Activated naive CD4-positive, alpha-beta T cell treated with anti-CD3 and anti-CD28 coated beads for 36 hours (primary cell): ENCODE measurements at regions of chr12 and their contacts with region 1.

Region 1: DNA sequence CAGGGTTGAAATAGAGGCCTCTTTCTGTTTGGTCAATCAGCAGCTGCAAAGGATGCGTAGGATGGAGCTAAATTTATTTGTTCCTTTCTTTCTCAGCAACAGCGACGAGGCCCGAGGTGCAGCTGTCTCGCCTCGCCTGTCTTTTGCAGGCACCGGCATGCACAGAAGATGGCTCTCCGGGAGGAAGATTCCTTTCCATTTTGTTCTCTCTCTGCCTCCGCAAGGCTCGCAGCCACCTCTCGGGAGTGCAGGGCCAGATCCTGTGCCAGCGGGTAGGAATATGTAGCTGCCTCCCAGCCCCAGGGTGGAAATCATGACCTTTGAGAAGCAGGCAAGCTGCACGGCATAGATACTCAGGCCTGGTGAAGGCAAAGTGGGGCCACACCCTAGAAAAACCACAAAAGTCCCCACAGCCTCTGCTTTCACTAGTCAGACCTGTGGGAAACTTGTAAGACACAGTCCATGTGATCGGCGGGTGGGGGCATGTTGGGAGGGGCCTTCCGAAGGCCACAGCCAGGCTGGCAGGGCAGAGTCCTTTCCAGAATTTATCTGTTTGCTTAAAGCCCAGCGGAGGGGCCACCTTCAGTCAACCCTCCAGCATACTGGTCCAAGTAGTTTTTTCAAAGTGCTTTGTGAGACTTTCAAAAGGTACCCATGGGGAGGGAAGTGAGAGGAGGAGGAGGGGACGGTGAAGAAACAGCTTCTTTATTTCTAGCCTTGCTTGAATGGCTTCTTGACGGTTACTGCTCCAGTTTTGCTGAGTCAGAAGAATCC is at the start of gene MAP1LC3B2:
- DNase-seq: peak; percentile 92
- H3K4me3 Mint-ChIP-seq: peak within 1 kb of the TSS; percentile 73
- H3K27ac Mint-ChIP-seq: peak within 1 kb of the TSS; percentile 95
- H3K4me1 Mint-ChIP-seq: peaks cover 22% of the 10 kb centered on the region
- H3K27me3 Mint-ChIP-seq: no peaks in the 10 kb centered on the region
- total RNA-seq, gene MAP1LC3B2: 1.2 to 1.5 TPM

Region 2: DNA sequence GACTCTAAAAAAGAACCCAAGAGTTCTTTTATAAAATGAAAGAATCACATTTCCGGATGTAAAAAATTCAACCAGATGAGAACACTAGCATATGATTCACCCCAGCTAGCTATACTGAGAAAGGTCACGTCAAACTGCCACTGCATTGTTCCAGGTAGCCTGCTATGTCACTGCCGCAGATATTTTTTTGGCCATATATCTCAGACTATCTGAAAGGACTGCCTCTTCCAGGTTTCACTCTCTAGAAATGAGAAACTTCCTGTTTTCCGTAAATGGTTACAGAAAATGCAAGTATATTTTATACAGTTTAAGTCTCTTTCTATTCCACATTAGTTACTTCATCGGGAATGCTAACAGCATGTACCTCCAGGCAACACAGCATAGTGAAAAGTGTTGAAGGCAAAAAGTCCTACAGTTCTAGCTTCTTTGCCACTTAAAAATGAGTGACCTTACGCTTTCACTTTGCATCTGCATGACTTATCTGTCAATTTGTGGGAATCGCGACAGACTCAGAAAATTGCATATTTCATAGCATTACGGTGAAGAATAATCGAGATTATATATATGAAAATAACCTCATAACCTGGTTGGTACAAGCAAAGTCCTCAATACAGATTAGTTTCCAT is 387.0 kb before region 1 on chr12:
- CTCF ChIA-PET with region 1: no interaction called
- intact Hi-C with region 1: loop called (anchors 1 kb)
- DNase-seq: peak; percentile 78
- H3K4me3 Mint-ChIP-seq: peak overlapping the region; percentile 58
- H3K27ac Mint-ChIP-seq: peak overlapping the region; percentile 92
- H3K4me1 Mint-ChIP-seq: peaks cover 67% of the 10 kb centered on the region
- H3K27me3 Mint-ChIP-seq: no peaks in the 10 kb centered on the region

Region 3: GRCh38 chr12:116533343-116534251 is 25.8 kb before region 1 on chr12:
- CTCF ChIA-PET with region 1: no interaction called
- intact Hi-C with region 1: loop called (anchors 1 kb)
- DNase-seq: peak; percentile 82
- H3K4me3 Mint-ChIP-seq: peak overlapping the region; percentile 80
- H3K27ac Mint-ChIP-seq: no peak overlapping the region
- H3K4me1 Mint-ChIP-seq: peaks cover 22% of the 10 kb centered on the region
- H3K27me3 Mint-ChIP-seq: no peaks in the 10 kb centered on the region

Region 4: GRCh38 chr12:116573776-116574175 is 14.4 kb after region 1 on chr12:
- CTCF ChIA-PET with region 1: no interaction called
- intact Hi-C with region 1: no loop called
- DNase-seq: no peak
- H3K4me3 Mint-ChIP-seq: no peak overlapping the region
- H3K27ac Mint-ChIP-seq: no peak overlapping the region
- H3K4me1 Mint-ChIP-seq: no peaks in the 10 kb centered on the region
- H3K27me3 Mint-ChIP-seq: no peaks in the 10 kb centered on the region

Region 5: GRCh38 chr12:116673681-116674111 is 114.3 kb after region 1 on chr12:
- CTCF ChIA-PET with region 1: no interaction called
- intact Hi-C with region 1: loop called (anchors 5 kb)
- DNase-seq: no peak
- H3K4me3 Mint-ChIP-seq: no peak overlapping the region
- H3K27ac Mint-ChIP-seq: peak overlapping the region; percentile 43
- H3K4me1 Mint-ChIP-seq: peaks cover 29% of the 10 kb centered on the region
- H3K27me3 Mint-ChIP-seq: no peaks in the 10 kb centered on the region